Panc1 (cell line): ENCODE measurements at regions of chr4 and their contacts with region 1.

Region 1: GRCh38 chr4:185987961-185988627 is 80.9 kb upstream of the TLR3 start:
- DNase-seq: no peak
- ATAC-seq: no peak
- H3K4me3 ChIP-seq: no peak overlapping the region
- H3K27ac ChIP-seq: no peak overlapping the region
- H3K4me1 ChIP-seq: no peaks in the 10 kb centered on the region
- H3K27me3 ChIP-seq: no peaks in the 10 kb centered on the region
- CTCF ChIP-seq: no peak

Region 2: GRCh38 chr4:186002853-186003252 is 14.8 kb after region 1 on chr4:
- CTCF ChIA-PET with region 1: no interaction called
- POLR2A ChIA-PET with region 1: no interaction called
- in situ Hi-C with region 1: no loop called
- intact Hi-C with region 1: loop called (anchors 2 kb)
- DNase-seq: no peak
- ATAC-seq: no peak
- H3K4me3 ChIP-seq: no peak overlapping the region
- H3K27ac ChIP-seq: no peak overlapping the region
- H3K4me1 ChIP-seq: no peaks in the 10 kb centered on the region
- H3K27me3 ChIP-seq: no peaks in the 10 kb centered on the region
- CTCF ChIP-seq: no peak

Region 3: GRCh38 chr4:186015212-186015785 is 27.2 kb after region 1 on chr4:
- CTCF ChIA-PET with region 1: no interaction called
- POLR2A ChIA-PET with region 1: no interaction called
- in situ Hi-C with region 1: no loop called
- intact Hi-C with region 1: no loop called
- DNase-seq: no peak
- ATAC-seq: no peak
- H3K4me3 ChIP-seq: no peak overlapping the region
- H3K27ac ChIP-seq: no peak overlapping the region
- H3K4me1 ChIP-seq: no peaks in the 10 kb centered on the region
- H3K27me3 ChIP-seq: no peaks in the 10 kb centered on the region
- CTCF ChIP-seq: peak; percentile 22; the same call in 1 of the 2 replicates